CD8-positive, alpha-beta T cell (primary cell): ENCODE measurements at regions of chr3 and their contacts with region 1.

Region 1: GRCh38 chr3:152183473-152183872 is 85.3 kb upstream of the MBNL1 start:
- DNase-seq: peak in 8 of 9 experiments; percentile 34 to 83 (median 62)
- ATAC-seq: peak; percentile 94
- H3K4me3 ChIP-seq: no peak overlapping the region
- H3K4me3 Mint-ChIP-seq: peak overlapping the region; percentile 40
- H3K27ac ChIP-seq: no peak overlapping the region
- H3K27ac Mint-ChIP-seq: peak overlapping the region; percentile 82
- H3K4me1 ChIP-seq: peaks cover 22% of the 10 kb centered on the region
- H3K4me1 Mint-ChIP-seq: peaks cover 58% of the 10 kb centered on the region
- H3K27me3 ChIP-seq: no peaks in the 10 kb centered on the region
- H3K27me3 Mint-ChIP-seq: no peaks in the 10 kb centered on the region
- CTCF ChIP-seq: peak; percentile 79

Region 2: DNA sequence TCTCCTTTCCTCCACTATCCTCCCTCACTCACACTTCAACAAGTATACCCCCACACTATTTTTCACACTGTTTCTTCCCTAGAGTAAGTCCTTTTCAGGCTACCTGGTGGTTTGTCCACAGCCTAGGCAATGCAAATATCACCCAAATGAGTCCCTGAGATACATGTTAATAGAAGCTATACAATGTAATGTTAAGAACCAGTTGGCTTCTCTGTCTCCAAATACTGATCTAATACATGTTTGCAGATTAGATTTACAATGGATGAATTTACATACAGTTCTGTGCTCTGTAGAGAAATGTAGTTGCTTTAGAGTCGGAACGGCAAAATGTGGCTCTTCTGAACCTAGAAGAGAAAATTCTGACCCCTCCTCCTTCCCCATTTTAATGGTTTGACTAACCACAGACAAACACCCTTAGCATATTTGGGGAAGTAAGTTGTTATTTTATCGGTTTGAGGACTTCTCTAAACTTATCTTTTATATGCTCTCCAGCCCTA is 21.7 kb after region 1 on chr3:
- CTCF ChIA-PET with region 1: interaction called, 8 read pairs
- POLR2A ChIA-PET with region 1: interaction called, 3 read pairs
- intact Hi-C with region 1: loop called in 1 of 2 experiments (anchors 2 kb)
- DNase-seq: peak in 2 of 9 experiments; percentile 47 to 62
- ATAC-seq: peak; percentile 31
- H3K4me3 ChIP-seq: peak overlapping the region; percentile 44 to 53
- H3K4me3 Mint-ChIP-seq: peak overlapping the region; percentile 86
- H3K27ac ChIP-seq: peak overlapping the region; percentile 32 to 60
- H3K27ac Mint-ChIP-seq: peak overlapping the region; percentile 93
- H3K4me1 ChIP-seq: peaks cover 57% of the 10 kb centered on the region
- H3K4me1 Mint-ChIP-seq: peaks cover 73% of the 10 kb centered on the region
- H3K27me3 ChIP-seq: no peaks in the 10 kb centered on the region
- H3K27me3 Mint-ChIP-seq: no peaks in the 10 kb centered on the region
- CTCF ChIP-seq: no peak

Region 3: GRCh38 chr3:152241142-152242017 is 57.9 kb after region 1 on chr3:
- CTCF ChIA-PET with region 1: interaction called, 14 read pairs
- POLR2A ChIA-PET with region 1: interaction called, 5 read pairs
- intact Hi-C with region 1: no loop called
- DNase-seq: peak in 2 of 9 experiments; percentile 40 to 62
- ATAC-seq: no peak
- H3K4me3 ChIP-seq: peak overlapping the region in 1 of 2 experiments; percentile 6
- H3K4me3 Mint-ChIP-seq: peak overlapping the region; percentile 92
- H3K27ac ChIP-seq: peak overlapping the region; percentile 11 to 71
- H3K27ac Mint-ChIP-seq: peak overlapping the region; percentile 96
- H3K4me1 ChIP-seq: peaks cover 51% of the 10 kb centered on the region
- H3K4me1 Mint-ChIP-seq: peaks cover 61% of the 10 kb centered on the region
- H3K27me3 ChIP-seq: no peaks in the 10 kb centered on the region
- H3K27me3 Mint-ChIP-seq: no peaks in the 10 kb centered on the region
- CTCF ChIP-seq: no peak

Region 4: DNA sequence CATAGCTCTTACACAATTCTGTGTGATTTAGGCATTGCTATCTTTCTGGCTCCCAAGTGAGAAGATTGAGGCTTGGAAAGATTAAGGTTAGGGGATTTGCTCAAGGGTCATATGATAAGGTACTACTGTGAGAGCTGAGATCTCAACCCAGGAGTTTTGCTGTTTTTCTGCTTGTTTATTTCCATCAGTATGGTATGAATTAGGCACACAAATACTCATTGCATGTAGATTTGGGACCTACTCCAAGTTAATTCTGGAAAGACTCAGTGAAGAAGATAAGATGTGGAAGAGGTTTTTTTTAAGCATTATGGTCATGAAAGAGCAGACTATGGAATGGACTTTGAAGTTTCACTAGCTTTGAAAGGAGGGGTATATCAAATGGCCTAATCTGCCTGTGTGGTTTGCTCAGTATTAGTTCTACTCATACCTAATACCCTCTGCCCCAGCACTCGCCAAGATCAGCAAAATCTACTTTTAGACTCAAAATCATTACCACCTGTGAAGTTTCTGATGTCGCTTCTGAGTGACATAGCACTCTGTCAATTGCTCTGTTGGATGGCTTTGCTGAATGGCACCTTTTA is 97.8 kb after region 1 on chr3:
- CTCF ChIA-PET with region 1: interaction called, 12 read pairs
- POLR2A ChIA-PET with region 1: interaction called, 3 read pairs
- intact Hi-C with region 1: loop called in 1 of 2 experiments (anchors 5 kb)
- DNase-seq: peak in 1 of 9 experiments; percentile 41
- ATAC-seq: no peak
- H3K4me3 ChIP-seq: peak overlapping the region in 1 of 2 experiments; percentile 14
- H3K4me3 Mint-ChIP-seq: peak overlapping the region; percentile 63
- H3K27ac ChIP-seq: peak overlapping the region in 1 of 2 experiments; percentile 69
- H3K27ac Mint-ChIP-seq: peak overlapping the region; percentile 87
- H3K4me1 ChIP-seq: peaks cover 88% of the 10 kb centered on the region
- H3K4me1 Mint-ChIP-seq: peaks cover 84% of the 10 kb centered on the region
- H3K27me3 ChIP-seq: no peaks in the 10 kb centered on the region
- H3K27me3 Mint-ChIP-seq: no peaks in the 10 kb centered on the region
- CTCF ChIP-seq: no peak

Region 5: DNA sequence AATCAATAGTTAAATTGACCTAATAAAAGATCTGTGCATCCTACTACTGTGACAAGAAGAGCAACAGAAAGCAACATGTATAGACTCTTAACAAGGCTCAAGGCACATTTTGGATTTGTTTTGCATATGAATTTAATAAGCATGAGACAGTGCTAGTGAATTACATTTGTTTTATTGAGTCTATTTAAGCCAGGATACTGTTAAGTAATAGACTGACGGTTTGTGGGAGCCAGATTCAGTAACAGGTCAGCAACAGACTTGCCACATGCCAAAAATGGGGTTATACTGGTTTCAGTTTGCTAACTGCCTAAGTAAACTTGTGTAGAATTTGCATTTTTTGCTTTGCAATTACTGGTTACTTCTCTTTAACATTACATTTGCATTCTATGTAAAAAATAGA is 139.3 kb after region 1 on chr3:
- CTCF ChIA-PET with region 1: interaction called, 9 read pairs
- POLR2A ChIA-PET with region 1: no interaction called
- intact Hi-C with region 1: loop called in 1 of 2 experiments (anchors 5 kb)
- DNase-seq: peak in 2 of 9 experiments; percentile 59 to 71
- ATAC-seq: peak; percentile 24
- H3K4me3 ChIP-seq: no peak overlapping the region
- H3K4me3 Mint-ChIP-seq: peak overlapping the region; percentile 62
- H3K27ac ChIP-seq: peak overlapping the region in 1 of 2 experiments; percentile 55
- H3K27ac Mint-ChIP-seq: peak overlapping the region; percentile 78
- H3K4me1 ChIP-seq: peaks cover 77% of the 10 kb centered on the region
- H3K4me1 Mint-ChIP-seq: peaks cover 83% of the 10 kb centered on the region
- H3K27me3 ChIP-seq: no peaks in the 10 kb centered on the region
- H3K27me3 Mint-ChIP-seq: no peaks in the 10 kb centered on the region
- CTCF ChIP-seq: no peak

Region 6: GRCh38 chr3:152444029-152444641 is 260.7 kb after region 1 on chr3:
- CTCF ChIA-PET with region 1: interaction called, 52 read pairs
- POLR2A ChIA-PET with region 1: interaction called, 3 read pairs
- intact Hi-C with region 1: loop called (anchors 1 kb)
- DNase-seq: peak in 2 of 9 experiments; percentile 53 to 70
- ATAC-seq: peak; percentile 46
- H3K4me3 ChIP-seq: no peak overlapping the region
- H3K4me3 Mint-ChIP-seq: peak overlapping the region; percentile 0
- H3K27ac ChIP-seq: no peak overlapping the region
- H3K27ac Mint-ChIP-seq: peak overlapping the region; percentile 55
- H3K4me1 ChIP-seq: peaks cover 55% of the 10 kb centered on the region
- H3K4me1 Mint-ChIP-seq: peaks cover 73% of the 10 kb centered on the region
- H3K27me3 ChIP-seq: no peaks in the 10 kb centered on the region
- H3K27me3 Mint-ChIP-seq: no peaks in the 10 kb centered on the region
- CTCF ChIP-seq: peak; percentile 68

Region 7: DNA sequence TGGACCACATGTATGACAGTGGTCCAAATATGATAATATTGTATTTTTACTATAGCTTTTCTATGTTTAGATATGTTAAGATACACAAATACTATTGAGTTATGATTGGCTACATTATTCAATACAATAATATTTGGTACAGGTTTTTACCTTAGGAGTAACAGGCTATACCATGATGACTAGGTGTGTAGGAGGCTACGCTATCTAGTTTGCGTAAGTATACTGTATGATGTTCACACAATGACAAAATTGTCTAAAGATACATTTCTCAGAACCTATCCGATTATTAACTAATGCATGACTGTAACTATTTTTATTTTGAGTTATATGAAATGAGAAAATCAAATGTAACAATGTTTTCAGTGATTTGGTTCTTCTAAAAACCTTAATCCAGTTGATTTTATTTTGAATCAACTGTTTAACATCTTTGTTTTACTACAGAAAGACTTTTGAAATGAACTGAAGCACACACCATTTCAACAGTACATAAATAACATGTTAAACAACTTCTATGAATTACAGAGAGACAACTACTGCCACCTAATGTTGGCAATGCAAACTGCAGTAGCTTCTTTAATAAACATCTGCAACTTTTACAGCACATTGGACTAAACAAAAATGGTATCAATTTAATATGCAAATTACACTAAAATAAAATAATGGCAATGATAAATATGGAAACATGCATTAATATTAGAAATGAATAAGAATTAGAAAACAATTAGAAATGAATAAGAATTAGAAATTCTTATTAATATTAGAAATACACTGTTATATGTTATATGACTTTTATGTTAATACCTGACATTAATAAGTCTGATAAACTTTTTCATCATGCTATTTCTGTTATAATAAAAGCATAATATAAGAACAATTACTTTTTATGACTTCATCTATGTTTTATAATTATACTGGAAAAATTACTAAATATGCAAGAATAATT is 341.0 kb after region 1 on chr3:
- CTCF ChIA-PET with region 1: no interaction called
- POLR2A ChIA-PET with region 1: no interaction called
- intact Hi-C with region 1: loop called in 1 of 2 experiments (anchors 2 kb)
- DNase-seq: peak in 5 of 9 experiments; percentile 4 to 65 (median 37)
- ATAC-seq: peak; percentile 57
- H3K4me3 ChIP-seq: no peak overlapping the region
- H3K4me3 Mint-ChIP-seq: no peak overlapping the region
- H3K27ac ChIP-seq: no peak overlapping the region
- H3K27ac Mint-ChIP-seq: no peak overlapping the region
- H3K4me1 ChIP-seq: no peaks in the 10 kb centered on the region
- H3K4me1 Mint-ChIP-seq: no peaks in the 10 kb centered on the region
- H3K27me3 ChIP-seq: no peaks in the 10 kb centered on the region
- H3K27me3 Mint-ChIP-seq: no peaks in the 10 kb centered on the region
- CTCF ChIP-seq: peak; percentile 94

Region 8: GRCh38 chr3:152825566-152825965 is 642.1 kb after region 1 on chr3:
- CTCF ChIA-PET with region 1: no interaction called
- POLR2A ChIA-PET with region 1: no interaction called
- intact Hi-C with region 1: no loop called
- DNase-seq: no peak
- ATAC-seq: no peak
- H3K4me3 ChIP-seq: no peak overlapping the region
- H3K4me3 Mint-ChIP-seq: no peak overlapping the region
- H3K27ac ChIP-seq: no peak overlapping the region
- H3K27ac Mint-ChIP-seq: no peak overlapping the region
- H3K4me1 ChIP-seq: no peaks in the 10 kb centered on the region
- H3K4me1 Mint-ChIP-seq: no peaks in the 10 kb centered on the region
- H3K27me3 ChIP-seq: peaks cover 0 to 2% of the 10 kb centered on the region in 2 experiments
- H3K27me3 Mint-ChIP-seq: no peaks in the 10 kb centered on the region
- CTCF ChIP-seq: no peak